Activated CD4-positive, alpha-beta memory T cell treated with anti-CD3 and anti-CD28 coated beads, Interleukin-2, amount 10 ng/mL, durations not matched to agents 7 days and 5 days (primary cell): ENCODE measurements at regions of chr5 and their contacts with region 1.

Region 1: GRCh38 chr5:96868603-96869371 is 7.5 kb upstream of the ERAP2 start:
- DNase-seq: no peak
- H3K4me3 Mint-ChIP-seq: no peak overlapping the region
- H3K27ac Mint-ChIP-seq: peak overlapping the region; percentile 82
- H3K4me1 Mint-ChIP-seq: peaks cover 54% of the 10 kb centered on the region
- H3K27me3 Mint-ChIP-seq: no peaks in the 10 kb centered on the region

Region 2: GRCh38 chr5:96584712-96585111 is 284.1 kb before region 1 on chr5:
- CTCF ChIA-PET with region 1: no interaction called
- POLR2A ChIA-PET with region 1: no interaction called
- DNase-seq: no peak
- H3K4me3 Mint-ChIP-seq: no peak overlapping the region
- H3K27ac Mint-ChIP-seq: no peak overlapping the region
- H3K4me1 Mint-ChIP-seq: peaks cover 8% of the 10 kb centered on the region
- H3K27me3 Mint-ChIP-seq: peaks cover 27% of the 10 kb centered on the region

Region 3: DNA sequence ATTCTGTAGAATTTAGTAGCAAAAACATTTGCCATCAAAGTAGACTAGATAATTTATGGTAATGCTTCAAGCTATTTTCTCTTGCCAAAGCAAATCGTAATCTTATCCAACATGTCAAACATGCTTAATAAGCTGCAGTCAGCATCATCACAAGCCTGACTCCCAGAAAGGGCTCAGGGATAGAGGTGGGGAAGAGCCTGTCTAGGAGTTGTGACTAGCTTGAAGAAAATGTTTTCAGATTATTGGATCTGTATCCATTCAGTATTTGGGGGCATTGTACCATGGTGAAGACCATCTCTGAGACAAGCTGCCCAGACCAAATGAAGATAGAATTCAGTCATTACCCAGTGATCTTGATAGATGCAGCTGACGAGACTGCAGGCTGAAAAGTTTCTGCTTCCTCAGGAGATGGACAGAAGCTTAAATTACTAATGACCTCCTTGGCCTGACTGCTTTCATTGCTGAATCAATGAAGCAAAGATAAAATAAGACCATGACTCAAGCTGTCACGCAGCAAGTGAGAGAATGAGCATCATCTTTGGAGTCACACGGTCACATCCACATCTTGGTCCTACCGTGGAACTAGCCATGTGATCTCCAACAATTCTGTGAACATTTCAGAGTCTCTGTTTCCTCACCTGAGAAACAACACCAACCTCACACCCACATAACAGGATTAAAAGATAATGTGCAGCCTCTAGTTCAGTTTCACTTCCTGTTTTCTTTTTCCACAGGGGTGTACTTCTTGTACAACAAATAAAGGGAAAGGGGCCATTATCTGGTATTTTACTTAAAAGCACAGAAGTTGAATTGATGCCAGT is 16.9 kb after region 1 on chr5:
- CTCF ChIA-PET with region 1: interaction called, 34 read pairs
- POLR2A ChIA-PET with region 1: interaction called, 13 read pairs
- DNase-seq: peak; percentile 51
- H3K4me3 Mint-ChIP-seq: peak overlapping the region; percentile 4
- H3K27ac Mint-ChIP-seq: peak overlapping the region; percentile 88
- H3K4me1 Mint-ChIP-seq: peaks cover 59% of the 10 kb centered on the region
- H3K27me3 Mint-ChIP-seq: no peaks in the 10 kb centered on the region

Region 4: GRCh38 chr5:96934708-96935558 is 66.1 kb after region 1 on chr5:
- CTCF ChIA-PET with region 1: interaction called, 15 read pairs
- POLR2A ChIA-PET with region 1: interaction called, 72 read pairs
- DNase-seq: peak; percentile 97
- H3K4me3 Mint-ChIP-seq: peak overlapping the region; percentile 80
- H3K27ac Mint-ChIP-seq: peak overlapping the region; percentile 96
- H3K4me1 Mint-ChIP-seq: peaks cover 48% of the 10 kb centered on the region
- H3K27me3 Mint-ChIP-seq: no peaks in the 10 kb centered on the region

Region 5: DNA sequence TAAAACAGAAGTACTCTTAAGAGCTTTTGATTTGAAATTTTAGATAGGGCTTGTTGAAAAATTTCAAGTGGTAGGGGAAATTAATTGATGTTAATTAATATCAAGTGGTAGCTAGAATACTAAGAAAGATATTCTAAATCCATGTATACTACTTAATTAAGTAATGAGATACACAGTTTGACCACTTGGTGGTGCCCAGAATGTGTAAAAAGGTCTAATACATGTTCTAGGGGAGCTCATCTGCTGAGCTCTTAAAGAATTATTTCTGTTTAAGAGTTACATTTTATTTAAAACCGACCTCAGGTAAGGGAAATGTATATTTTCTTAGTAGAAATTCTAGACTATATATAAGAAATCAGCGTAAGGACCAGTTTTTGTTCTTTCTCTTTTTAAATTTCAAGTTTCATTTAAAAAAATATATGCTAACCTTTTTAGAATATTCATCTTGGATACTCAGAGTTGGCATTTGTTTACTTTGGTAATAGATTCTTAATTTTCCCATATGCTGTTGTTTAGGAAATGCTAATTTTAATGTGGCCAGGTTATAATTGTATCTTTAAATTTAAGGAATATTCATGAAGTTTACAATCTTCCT is 128.6 kb after region 1 on chr5:
- CTCF ChIA-PET with region 1: interaction called, 20 read pairs
- POLR2A ChIA-PET with region 1: no interaction called
- DNase-seq: no peak
- H3K4me3 Mint-ChIP-seq: no peak overlapping the region
- H3K27ac Mint-ChIP-seq: no peak overlapping the region
- H3K4me1 Mint-ChIP-seq: peaks cover 21% of the 10 kb centered on the region
- H3K27me3 Mint-ChIP-seq: no peaks in the 10 kb centered on the region

Region 6: GRCh38 chr5:97162045-97162444 is 293.3 kb after region 1 on chr5:
- CTCF ChIA-PET with region 1: interaction called, 89 read pairs
- POLR2A ChIA-PET with region 1: interaction called, 5 read pairs
- DNase-seq: peak; percentile 56
- H3K4me3 Mint-ChIP-seq: no peak overlapping the region
- H3K27ac Mint-ChIP-seq: no peak overlapping the region
- H3K4me1 Mint-ChIP-seq: peaks cover 19% of the 10 kb centered on the region
- H3K27me3 Mint-ChIP-seq: no peaks in the 10 kb centered on the region